ENCODE measurements at regions of chr2 and their contacts with region 1.

Region 1: GRCh38 chr2:38685116-38685735 is 19.3 kb downstream of the GALM start:
- DNase-seq: no peak
- H3K4me3 ChIP-seq: no peak overlapping the region
- H3K4me3 Mint-ChIP-seq: peak overlapping the region in 3 of 8 donors; percentile 24 to 62 (median 53)
- H3K27ac ChIP-seq: no peak overlapping the region
- H3K27ac Mint-ChIP-seq: peak overlapping the region in 6 of 7 donors; percentile 10 to 98 (median 83)
- H3K4me1 ChIP-seq: peaks cover 61% of the 10 kb centered on the region
- H3K4me1 Mint-ChIP-seq: peaks cover 38 to 76% (median 54%) of the 10 kb centered on the region in 4 donors
- H3K27me3 ChIP-seq: no peaks in the 10 kb centered on the region
- H3K27me3 Mint-ChIP-seq: no peaks in the 10 kb centered on the region

Region 2: DNA sequence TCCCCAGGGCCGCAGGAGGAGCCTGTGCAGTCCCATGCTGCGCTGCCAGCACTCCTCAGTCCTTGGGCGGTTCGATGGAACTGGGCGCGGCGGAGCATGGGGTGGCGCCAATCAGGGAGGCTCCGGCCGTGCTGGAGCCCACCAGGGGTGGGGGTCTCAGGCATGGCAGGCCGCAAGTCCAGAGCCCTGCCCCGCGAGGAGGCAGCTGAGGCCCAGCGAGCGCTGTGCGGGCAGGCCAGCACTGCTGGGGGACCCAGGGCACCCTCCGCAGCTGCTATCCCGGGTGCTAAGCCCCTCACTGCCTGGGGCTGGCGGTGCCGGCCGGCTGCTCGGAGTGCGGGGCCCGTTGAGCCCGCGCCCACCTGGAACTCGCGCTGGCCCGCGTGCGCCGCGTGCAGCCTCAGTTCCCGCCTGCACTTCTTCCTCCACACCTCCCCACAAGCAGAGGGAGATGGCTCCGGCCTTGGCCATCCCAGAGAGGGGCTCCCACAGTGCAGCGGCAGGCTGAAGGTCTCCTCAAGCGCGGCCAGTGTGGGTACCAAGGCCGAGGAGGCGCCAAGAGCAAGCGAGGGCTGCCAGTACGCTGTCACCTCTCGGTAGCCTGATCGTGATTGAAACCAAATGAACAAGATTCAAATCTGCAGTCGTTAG is 42.1 kb before region 1 on chr2:
- CTCF ChIA-PET with region 1: interaction called, 5 read pairs
- POLR2A ChIA-PET with region 1: interaction called, 10 read pairs
- intact Hi-C with region 1: no loop called
- DNase-seq: peak in 1 of 5 donors; percentile 5
- H3K4me3 ChIP-seq: peak overlapping the region in 1 of 2 donors; percentile 12
- H3K4me3 Mint-ChIP-seq: peak overlapping the region in 6 of 8 donors; percentile 68 to 89 (median 77)
- H3K27ac ChIP-seq: peak overlapping the region; percentile 51
- H3K27ac Mint-ChIP-seq: peak overlapping the region; percentile 73 to 97 (median 95)
- H3K4me1 ChIP-seq: peaks cover 30% of the 10 kb centered on the region
- H3K4me1 Mint-ChIP-seq: peaks cover 17 to 39% (median 26%) of the 10 kb centered on the region in 4 donors
- H3K27me3 ChIP-seq: no peaks in the 10 kb centered on the region
- H3K27me3 Mint-ChIP-seq: no peaks in the 10 kb centered on the region

Region 3: DNA sequence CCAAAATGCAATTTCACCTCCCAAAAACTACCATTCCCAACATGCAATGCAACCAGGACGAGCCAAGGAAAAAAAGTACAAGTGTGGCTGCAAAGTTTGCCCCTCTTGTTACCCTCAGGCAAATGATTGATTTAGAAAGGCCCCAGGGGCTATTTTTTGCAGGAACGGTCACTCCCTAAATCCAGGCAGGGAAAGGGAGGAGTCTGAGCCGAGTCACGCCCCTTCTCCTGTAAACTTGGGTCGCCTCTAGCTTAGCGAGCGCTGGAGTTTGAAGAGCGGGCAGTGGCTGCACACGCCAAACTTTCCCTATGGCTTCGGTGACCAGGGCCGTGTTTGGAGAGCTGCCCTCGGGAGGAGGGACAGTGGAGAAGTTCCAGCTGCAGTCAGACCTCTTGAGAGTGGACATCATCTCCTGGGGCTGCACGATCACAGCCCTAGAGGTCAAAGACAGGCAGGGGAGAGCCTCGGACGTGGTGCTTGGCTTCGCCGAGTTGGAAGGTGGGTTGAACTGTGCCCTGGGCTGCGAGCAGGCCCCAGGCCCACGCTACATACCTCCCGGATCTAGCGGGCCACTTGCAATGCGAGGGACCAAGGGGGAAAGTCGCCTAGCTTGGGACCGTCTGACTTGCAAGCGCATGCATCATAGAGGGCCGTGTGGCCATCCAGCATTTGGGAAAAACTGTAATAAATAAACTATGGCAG is 19.2 kb before region 1 on chr2 and contains the start of gene GALM:
- CTCF ChIA-PET with region 1: interaction called, 34 read pairs
- POLR2A ChIA-PET with region 1: interaction called, 87 read pairs
- intact Hi-C with region 1: loop called (anchors 2 kb)
- DNase-seq: peak; percentile 51 to 68 (median 62)
- H3K4me3 ChIP-seq: peak within 1 kb of the TSS; percentile 63 to 74
- H3K4me3 Mint-ChIP-seq: peak within 1 kb of the TSS; percentile 81 to 97 (median 94)
- H3K27ac ChIP-seq: peak within 1 kb of the TSS; percentile 73
- H3K27ac Mint-ChIP-seq: peak within 1 kb of the TSS; percentile 93 to 100 (median 98)
- H3K4me1 ChIP-seq: peaks cover 73% of the 10 kb centered on the region
- H3K4me1 Mint-ChIP-seq: peaks cover 47 to 80% (median 64%) of the 10 kb centered on the region in 4 donors
- H3K27me3 ChIP-seq: no peaks in the 10 kb centered on the region
- H3K27me3 Mint-ChIP-seq: no peaks in the 10 kb centered on the region
- total RNA-seq, gene GALM: 35.5 to 35.8 TPM

Region 4: GRCh38 chr2:38697125-38697840 is 12.1 kb after region 1 on chr2:
- CTCF ChIA-PET with region 1: interaction called, 96 read pairs
- POLR2A ChIA-PET with region 1: interaction called, 50 read pairs
- intact Hi-C with region 1: loop called (anchors 2 kb)
- DNase-seq: peak; percentile 74 to 87 (median 75)
- H3K4me3 ChIP-seq: peak overlapping the region in 1 of 2 donors; percentile 0
- H3K4me3 Mint-ChIP-seq: peak overlapping the region; percentile 43 to 81 (median 76)
- H3K27ac ChIP-seq: peak overlapping the region; percentile 72
- H3K27ac Mint-ChIP-seq: peak overlapping the region; percentile 93 to 98 (median 97)
- H3K4me1 ChIP-seq: peaks cover 100% of the 10 kb centered on the region
- H3K4me1 Mint-ChIP-seq: peaks cover 52 to 92% (median 74%) of the 10 kb centered on the region in 4 donors
- H3K27me3 ChIP-seq: no peaks in the 10 kb centered on the region
- H3K27me3 Mint-ChIP-seq: no peaks in the 10 kb centered on the region

Region 5: GRCh38 chr2:38709567-38710194 is 24.5 kb after region 1 on chr2:
- CTCF ChIA-PET with region 1: interaction called, 19 read pairs
- POLR2A ChIA-PET with region 1: interaction called, 13 read pairs
- intact Hi-C with region 1: no loop called
- DNase-seq: peak; percentile 81 to 87 (median 84)
- H3K4me3 ChIP-seq: peak overlapping the region in 1 of 2 donors; percentile 13
- H3K4me3 Mint-ChIP-seq: peak overlapping the region; percentile 33 to 90 (median 80)
- H3K27ac ChIP-seq: peak overlapping the region; percentile 46
- H3K27ac Mint-ChIP-seq: peak overlapping the region; percentile 92 to 98 (median 96)
- H3K4me1 ChIP-seq: peaks cover 84% of the 10 kb centered on the region
- H3K4me1 Mint-ChIP-seq: peaks cover 58 to 88% (median 74%) of the 10 kb centered on the region in 4 donors
- H3K27me3 ChIP-seq: no peaks in the 10 kb centered on the region
- H3K27me3 Mint-ChIP-seq: no peaks in the 10 kb centered on the region

Region 6: DNA sequence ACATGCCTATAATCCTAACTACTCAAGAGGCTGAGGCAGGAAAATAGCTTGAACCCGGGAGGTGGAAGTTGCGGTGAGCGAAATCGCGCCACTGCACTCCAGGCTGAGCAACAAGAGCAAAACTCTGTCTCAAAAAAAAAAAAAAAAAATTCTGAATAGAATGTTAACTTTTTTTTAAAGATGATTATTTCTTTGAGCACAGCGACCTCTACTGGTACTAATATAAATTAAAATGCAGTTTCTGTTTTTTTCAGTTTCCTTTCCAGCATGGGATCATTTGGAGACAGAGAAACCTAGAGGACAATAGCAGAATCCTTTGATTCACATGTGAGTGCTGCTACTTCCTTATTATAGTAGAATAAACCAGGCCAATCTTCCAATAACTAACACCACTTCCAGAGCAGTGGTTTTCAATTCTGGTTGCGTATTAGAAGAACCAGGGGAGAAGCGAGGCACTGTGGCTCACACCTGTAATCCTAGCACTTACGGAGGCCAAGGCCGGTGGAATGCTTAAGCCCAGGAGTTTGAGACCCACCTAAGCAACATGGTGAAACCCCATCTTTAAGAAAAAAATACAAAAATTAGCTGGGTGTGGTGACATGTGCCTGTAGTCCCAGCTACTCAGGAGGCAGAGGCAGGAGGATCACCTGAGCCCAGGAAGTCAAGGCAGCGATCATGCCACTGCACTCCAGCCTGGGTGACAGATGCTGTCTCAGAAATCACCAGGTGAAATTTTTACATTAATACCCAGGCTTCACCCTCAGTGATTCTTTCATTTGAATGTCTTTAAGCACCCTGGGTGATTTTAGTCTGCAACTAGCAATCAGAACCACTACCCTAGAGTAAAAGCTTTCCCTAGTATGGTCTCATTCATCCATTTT is 55.9 kb after region 1 on chr2:
- CTCF ChIA-PET with region 1: interaction called, 13 read pairs
- POLR2A ChIA-PET with region 1: interaction called, 8 read pairs
- intact Hi-C with region 1: no loop called
- DNase-seq: peak; percentile 60 to 71 (median 65)
- H3K4me3 ChIP-seq: no peak overlapping the region
- H3K4me3 Mint-ChIP-seq: peak overlapping the region in 4 of 8 donors; percentile 15 to 39 (median 27)
- H3K27ac ChIP-seq: no peak overlapping the region
- H3K27ac Mint-ChIP-seq: peak overlapping the region; percentile 30 to 99 (median 83)
- H3K4me1 ChIP-seq: peaks cover 54% of the 10 kb centered on the region
- H3K4me1 Mint-ChIP-seq: peaks cover 31 to 78% (median 44%) of the 10 kb centered on the region in 4 donors
- H3K27me3 ChIP-seq: no peaks in the 10 kb centered on the region
- H3K27me3 Mint-ChIP-seq: no peaks in the 10 kb centered on the region

Measured in CD4-positive, alpha-beta memory T cell (primary cell).